ENCODE measurements at regions of chr4 and their contacts with region 1.

Region 1: GRCh38 chr4:139603576-139604387 is 47.8 kb upstream of the SETD7 start:
- DNase-seq: no peak
- ATAC-seq: peak; percentile 75; the same call in 1 of the 2 replicates
- H3K4me3 ChIP-seq: no peak overlapping the region
- H3K27ac ChIP-seq: no peak overlapping the region
- H3K4me1 ChIP-seq: peaks cover 6% of the 10 kb centered on the region; the same call in 1 of the 2 replicates
- H3K27me3 ChIP-seq: no peaks in the 10 kb centered on the region
- CTCF ChIP-seq: peak; percentile 67

Region 2: GRCh38 chr4:139633661-139634060 is 29.9 kb after region 1 on chr4:
- CTCF ChIA-PET with region 1: interaction called, 16 read pairs
- POLR2A ChIA-PET with region 1: no interaction called
- in situ Hi-C with region 1: no loop called
- intact Hi-C with region 1: no loop called
- DNase-seq: no peak
- ATAC-seq: peak; percentile 96
- H3K4me3 ChIP-seq: peak overlapping the region; percentile 28 to 55
- H3K27ac ChIP-seq: no peak overlapping the region
- H3K4me1 ChIP-seq: no peaks in the 10 kb centered on the region
- H3K27me3 ChIP-seq: no peaks in the 10 kb centered on the region
- CTCF ChIP-seq: peak; percentile 76

Region 3: GRCh38 chr4:139651282-139652194 is 47.8 kb after region 1 on chr4:
- CTCF ChIA-PET with region 1: interaction called, 18 read pairs
- POLR2A ChIA-PET with region 1: no interaction called
- in situ Hi-C with region 1: no loop called
- intact Hi-C with region 1: loop called (anchors 1 kb)
- DNase-seq: no peak
- ATAC-seq: peak; percentile 86
- H3K4me3 ChIP-seq: 0 out of 4 replicates have a peak overlapping the region, but pooled peaks of 1 of the 2 experiments have one; percentile 20
- H3K27ac ChIP-seq: no peak overlapping the region
- H3K4me1 ChIP-seq: no peaks in the 10 kb centered on the region
- H3K27me3 ChIP-seq: no peaks in the 10 kb centered on the region
- CTCF ChIP-seq: peak; percentile 85

Region 4: DNA sequence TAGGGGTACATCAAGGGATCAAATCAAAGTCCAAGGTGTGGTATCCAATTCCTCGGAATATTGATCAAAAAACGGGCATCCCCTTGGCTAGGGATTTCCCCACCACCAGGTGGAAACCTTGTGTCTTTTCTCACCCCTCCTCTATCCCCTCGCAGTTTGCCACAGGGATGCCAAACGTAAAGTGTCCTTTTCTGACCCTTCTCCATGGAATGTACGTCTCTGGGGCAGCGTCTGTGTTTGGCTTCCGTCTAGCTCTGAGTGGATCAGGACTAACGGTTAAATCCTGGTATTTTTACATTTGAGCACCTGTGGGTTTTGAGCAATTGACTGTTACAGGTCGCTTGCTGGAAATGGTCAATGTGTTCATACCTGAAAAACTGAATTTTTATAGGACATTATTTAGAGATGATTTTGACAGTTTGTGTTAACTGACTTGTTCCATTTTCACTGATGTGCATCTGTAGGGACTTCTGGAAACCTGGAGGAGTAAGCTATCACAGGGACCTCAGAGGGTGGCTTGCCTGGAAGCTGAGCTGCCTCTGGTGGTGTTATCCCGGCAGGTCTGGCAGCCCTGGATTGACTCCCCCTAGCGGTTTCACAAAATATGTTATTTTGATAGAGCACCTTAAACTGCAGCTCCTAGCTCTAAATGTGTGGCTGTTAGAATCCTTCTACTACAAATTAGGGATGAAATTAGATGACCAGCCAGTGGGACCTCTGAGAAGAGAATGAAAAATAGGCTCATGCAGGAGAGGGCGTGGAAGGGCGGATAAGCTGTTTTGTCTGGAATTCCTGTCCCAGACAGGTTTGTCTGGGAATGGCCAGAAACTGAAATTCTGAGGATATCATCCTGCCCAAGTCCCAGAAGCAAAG is 53.1 kb after region 1 on chr4:
- CTCF ChIA-PET with region 1: interaction called, 18 read pairs
- POLR2A ChIA-PET with region 1: no interaction called
- in situ Hi-C with region 1: no loop called
- intact Hi-C with region 1: no loop called
- DNase-seq: no peak
- ATAC-seq: peak; percentile 91
- H3K4me3 ChIP-seq: peak overlapping the region in 1 of 2 experiments; percentile 23; a peak in 1 of 4 replicates
- H3K27ac ChIP-seq: no peak overlapping the region
- H3K4me1 ChIP-seq: no peaks in the 10 kb centered on the region
- H3K27me3 ChIP-seq: no peaks in the 10 kb centered on the region
- CTCF ChIP-seq: peak; percentile 89

Measured in Panc1 (cell line).